ENCODE measurements at regions of chr14 and their contacts with region 1.

Region 1: GRCh38 chr14:59132796-59133494 is 55.5 kb upstream of the DAAM1 start:
- DNase-seq: no peak
- ATAC-seq: peak; percentile 15

Region 2: DNA sequence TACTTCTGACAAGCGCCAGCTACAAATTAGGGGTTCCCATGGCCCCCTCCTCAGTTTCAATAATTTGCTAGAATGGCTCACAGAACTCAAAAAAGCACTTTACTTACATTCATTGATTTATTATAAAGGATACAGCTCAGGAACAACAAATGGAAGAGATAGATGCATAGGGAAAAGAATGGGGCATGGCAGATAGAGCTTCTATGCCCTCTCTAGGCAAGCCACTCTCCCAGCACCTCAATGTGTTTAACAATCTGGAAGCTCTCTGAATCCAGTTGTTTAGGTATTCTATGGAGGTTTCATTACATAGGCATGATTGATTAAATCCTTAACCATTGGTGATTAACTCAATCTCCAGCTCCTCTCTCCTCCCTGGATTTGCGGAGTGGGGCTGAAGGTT is 128.9 kb before region 1 on chr14:
- intact Hi-C with region 1: no loop called
- DNase-seq: no peak
- ATAC-seq: no peak

Region 3: DNA sequence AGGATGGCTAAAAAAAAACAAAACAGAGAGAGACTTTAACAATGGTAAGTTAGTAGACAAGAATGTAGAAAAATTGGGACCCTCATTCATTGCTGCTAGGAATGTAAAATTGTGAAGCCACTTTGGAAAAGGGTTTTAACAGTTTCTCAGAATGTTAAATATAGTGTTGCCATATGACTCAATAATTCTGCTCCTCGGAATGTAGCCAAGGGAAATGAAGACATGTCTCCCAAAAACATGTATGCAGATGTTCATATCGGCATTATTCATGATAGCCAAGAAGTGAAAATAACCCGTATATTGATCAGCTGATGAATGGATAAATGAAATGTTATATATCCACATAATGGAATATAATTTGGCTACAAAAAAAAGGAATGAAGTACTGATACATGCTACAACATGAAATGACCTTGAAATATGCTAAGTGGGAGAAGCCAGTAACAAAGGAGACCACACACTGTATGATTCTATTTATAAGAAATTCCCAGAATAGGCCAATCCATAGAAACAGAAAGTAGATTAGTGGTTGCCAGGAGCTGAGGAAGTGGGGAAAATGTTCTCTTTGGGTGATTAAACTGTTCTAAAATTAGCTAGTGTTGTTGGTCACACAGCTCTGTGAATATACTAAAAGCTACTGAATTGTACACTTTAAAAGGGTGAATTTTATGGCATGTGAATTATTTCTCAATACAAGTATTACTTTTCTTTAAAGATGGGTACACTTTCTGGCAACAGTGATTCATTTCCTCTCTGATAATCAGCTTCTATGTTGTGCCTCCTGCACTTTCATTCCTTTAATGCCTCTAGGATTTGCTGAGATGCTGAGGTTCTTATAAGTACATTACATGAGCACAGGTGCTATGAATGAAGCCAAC is 188.1 kb after region 1 on chr14:
- intact Hi-C with region 1: loop called (anchors 10 kb)
- DNase-seq: no peak
- ATAC-seq: peak; percentile 76

Measured in left ventricle myocardium superior (tissue), 1 donor.